ENCODE measurements at regions of chr10 and their contacts with region 1.

Region 1: DNA sequence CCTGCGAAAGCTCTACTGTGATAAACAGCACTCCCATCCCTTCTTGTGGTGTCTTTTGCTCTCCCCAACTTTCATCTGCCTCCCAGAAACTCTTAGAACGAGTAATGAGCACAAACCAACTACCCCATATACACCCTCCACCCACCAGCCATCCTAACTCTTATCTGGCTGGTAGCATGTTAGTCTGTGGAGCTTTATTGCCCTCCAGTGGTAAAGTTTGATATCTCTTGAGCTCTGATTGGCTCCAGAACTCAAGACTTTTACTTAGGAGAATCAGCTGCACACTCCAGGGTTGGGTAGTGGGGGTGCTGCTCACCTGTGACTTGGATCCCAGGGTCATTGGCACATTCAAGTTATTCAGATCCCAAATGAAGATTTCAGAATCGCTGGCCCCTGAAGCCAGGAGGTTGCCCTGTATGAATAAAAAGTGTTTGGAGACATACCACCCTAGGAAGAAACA is 10.9 kb downstream of the SEC31B start:
- DNase-seq: peak; percentile 56 to 64
- H3K4me3 ChIP-seq: no peak overlapping the region
- H3K4me1 ChIP-seq: peaks cover 7% of the 10 kb centered on the region
- H3K27me3 ChIP-seq: no peaks in the 10 kb centered on the region

Region 2: DNA sequence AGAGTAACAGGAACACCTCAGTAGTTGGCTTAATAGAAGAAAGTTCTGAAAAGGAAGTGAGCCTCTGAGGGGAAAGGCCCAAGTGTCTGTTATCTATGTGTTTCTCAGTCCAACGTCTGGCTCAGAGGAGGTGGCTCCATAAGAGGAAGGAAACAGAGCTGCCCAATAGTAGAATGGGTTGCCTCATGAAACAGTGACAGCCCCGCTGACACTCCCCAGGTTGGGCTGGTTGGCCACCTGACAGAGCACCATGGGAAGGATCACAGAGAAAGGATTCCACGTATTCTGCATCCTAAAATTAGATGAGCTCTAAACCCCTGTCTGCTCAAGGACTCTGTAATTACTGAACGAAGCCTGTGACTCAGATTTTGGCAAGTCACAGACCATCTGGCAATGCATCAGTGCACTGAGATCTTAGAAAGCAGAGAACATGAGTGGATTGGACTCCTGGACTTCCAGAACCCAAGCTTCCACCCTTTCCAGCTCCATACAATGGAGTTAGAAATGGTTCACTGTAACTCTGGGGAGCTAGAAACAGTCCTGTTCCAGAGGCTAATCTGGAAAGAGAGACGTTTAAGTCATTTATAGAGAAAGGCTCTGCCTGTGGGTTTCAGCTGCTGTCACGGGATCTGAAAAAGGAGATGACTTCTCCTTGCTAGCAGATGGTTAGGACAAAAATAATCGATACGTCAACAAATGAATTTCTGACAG is 181.6 kb before region 1 on chr10:
- in situ Hi-C with region 1: no loop called
- DNase-seq: no peak
- H3K4me3 ChIP-seq: no peak overlapping the region
- H3K4me1 ChIP-seq: no peaks in the 10 kb centered on the region
- H3K27me3 ChIP-seq: peaks cover 31% of the 10 kb centered on the region

Region 3: GRCh38 chr10:100346765-100347567 is 161.8 kb before region 1 on chr10 and contains the start of gene SCD:
- in situ Hi-C with region 1: loop called (anchors 10 kb)
- DNase-seq: peak; percentile 96 to 98
- H3K4me3 ChIP-seq: peak within 1 kb of the TSS; percentile 95
- H3K4me1 ChIP-seq: peaks cover 28% of the 10 kb centered on the region
- H3K27me3 ChIP-seq: no peaks in the 10 kb centered on the region

Region 4: GRCh38 chr10:100433253-100434240 is 75.2 kb before region 1 on chr10:
- in situ Hi-C with region 1: loop called (anchors 5 kb)
- DNase-seq: peak; percentile 86 to 98
- H3K4me3 ChIP-seq: no peak overlapping the region
- H3K4me1 ChIP-seq: peaks cover 6% of the 10 kb centered on the region
- H3K27me3 ChIP-seq: no peaks in the 10 kb centered on the region

Region 5: GRCh38 chr10:100653957-100654781 is 145.4 kb after region 1 on chr10:
- in situ Hi-C with region 1: no loop called
- DNase-seq: peak; percentile 14 to 65
- H3K4me3 ChIP-seq: peak overlapping the region; percentile 20
- H3K4me1 ChIP-seq: peaks cover 13% of the 10 kb centered on the region
- H3K27me3 ChIP-seq: peaks cover 43% of the 10 kb centered on the region

Measured in HAP-1 (cell line).